Naive thymus-derived CD8-positive, alpha-beta T cell (primary cell): ENCODE measurements at regions of chr2 and their contacts with region 1.

Region 1: DNA sequence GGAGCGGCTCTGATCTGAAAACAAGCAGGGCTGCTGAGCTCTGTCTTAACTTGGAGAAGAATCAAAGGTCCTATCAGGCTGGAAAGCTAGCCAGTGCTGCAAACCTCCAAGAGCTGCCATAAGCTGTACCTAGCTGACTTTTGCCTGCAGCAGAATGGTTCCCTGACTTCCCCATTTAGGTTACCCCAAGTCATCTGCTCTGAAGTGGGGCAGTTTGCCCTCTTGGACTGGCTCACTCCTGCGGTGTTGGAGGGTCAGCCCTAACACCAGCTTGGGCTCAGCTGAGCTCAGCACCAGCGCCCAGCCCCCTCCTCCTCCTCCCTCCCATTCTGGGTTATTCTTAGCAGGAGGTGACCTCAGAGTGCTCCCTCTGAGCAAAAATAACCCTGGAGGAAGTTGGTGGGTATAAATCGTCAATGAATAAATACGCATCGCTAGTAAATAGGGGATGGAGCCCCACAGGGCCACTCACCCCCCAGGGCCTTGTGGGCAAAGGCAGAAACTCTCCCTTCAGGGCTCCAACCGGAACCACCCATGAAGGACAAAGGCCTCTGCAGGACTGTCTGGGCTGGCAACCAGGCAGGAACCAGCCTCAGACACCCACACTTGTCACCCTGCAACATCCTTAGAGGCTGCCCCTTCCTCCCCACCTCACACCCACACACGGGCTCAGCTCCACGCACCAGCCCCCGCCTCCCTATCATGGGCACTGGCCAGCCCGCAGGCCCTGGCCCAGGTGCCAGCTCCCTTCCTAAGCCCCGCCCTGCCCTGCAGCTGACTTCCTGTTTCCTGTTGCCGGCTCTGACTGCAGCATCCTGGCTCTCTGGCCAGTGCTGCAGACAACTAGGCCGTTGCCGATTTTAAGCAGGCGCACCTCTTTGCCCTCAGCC is 46.9 kb downstream of the DNMT3A start:
- DNase-seq: peak; percentile 56 to 89 (median 75)
- ATAC-seq: peak; percentile 79 to 82
- H3K4me3 Mint-ChIP-seq: peak overlapping the region; percentile 66 to 94 (median 83)
- H3K27ac Mint-ChIP-seq: peak overlapping the region; percentile 95 to 99 (median 98)
- H3K4me1 Mint-ChIP-seq: peaks cover 39 to 79% (median 75%) of the 10 kb centered on the region in 4 donors
- H3K27me3 Mint-ChIP-seq: no peaks in the 10 kb centered on the region

Region 2: GRCh38 chr2:25252281-25253105 is 42.3 kb before region 1 on chr2:
- POLR2A ChIA-PET with region 1: interaction called, 28 read pairs
- DNase-seq: peak; percentile 35 to 72 (median 49)
- ATAC-seq: peak; percentile 46 to 56
- H3K4me3 Mint-ChIP-seq: peak overlapping the region; percentile 83 to 95 (median 91)
- H3K27ac Mint-ChIP-seq: peak overlapping the region; percentile 85 to 96 (median 91)
- H3K4me1 Mint-ChIP-seq: peaks cover 42 to 62% (median 53%) of the 10 kb centered on the region in 4 donors
- H3K27me3 Mint-ChIP-seq: no peaks in the 10 kb centered on the region

Region 3: GRCh38 chr2:25265802-25266201 is 29.0 kb before region 1 on chr2:
- POLR2A ChIA-PET with region 1: interaction called, 12 read pairs
- DNase-seq: peak in 9 of 10 donors; percentile 23 to 74 (median 55)
- ATAC-seq: peak; percentile 87 to 89
- H3K4me3 Mint-ChIP-seq: peak overlapping the region in 8 of 10 donors; percentile 37 to 75 (median 60)
- H3K27ac Mint-ChIP-seq: peak overlapping the region; percentile 55 to 93 (median 84)
- H3K4me1 Mint-ChIP-seq: peaks cover 28 to 72% (median 63%) of the 10 kb centered on the region in 4 donors
- H3K27me3 Mint-ChIP-seq: no peaks in the 10 kb centered on the region

Region 4: GRCh38 chr2:25309402-25309801 is 14.6 kb after region 1 on chr2:
- POLR2A ChIA-PET with region 1: interaction called, 83 read pairs
- DNase-seq: peak; percentile 45 to 85 (median 66)
- ATAC-seq: peak; percentile 48 to 54
- H3K4me3 Mint-ChIP-seq: peak overlapping the region in 8 of 10 donors; percentile 23 to 73 (median 53)
- H3K27ac Mint-ChIP-seq: peak overlapping the region; percentile 58 to 91 (median 85)
- H3K4me1 Mint-ChIP-seq: peaks cover 50 to 98% (median 90%) of the 10 kb centered on the region in 4 donors
- H3K27me3 Mint-ChIP-seq: no peaks in the 10 kb centered on the region

Region 5: GRCh38 chr2:25314514-25315315 is 19.9 kb after region 1 on chr2:
- POLR2A ChIA-PET with region 1: interaction called, 83 read pairs
- DNase-seq: peak in 9 of 10 donors; percentile 39 to 78 (median 63)
- ATAC-seq: peak; percentile 83 to 88
- H3K4me3 Mint-ChIP-seq: peak overlapping the region; percentile 45 to 85 (median 79)
- H3K27ac Mint-ChIP-seq: peak overlapping the region; percentile 87 to 96 (median 93)
- H3K4me1 Mint-ChIP-seq: peaks cover 32 to 83% (median 72%) of the 10 kb centered on the region in 4 donors
- H3K27me3 Mint-ChIP-seq: no peaks in the 10 kb centered on the region

Region 6: GRCh38 chr2:25342372-25343186 is 47.8 kb after region 1 on chr2:
- POLR2A ChIA-PET with region 1: interaction called, 61 read pairs
- DNase-seq: peak; percentile 74 to 88 (median 82)
- ATAC-seq: peak; percentile 80 to 87
- H3K4me3 Mint-ChIP-seq: peak overlapping the region; percentile 70 to 90 (median 81)
- H3K27ac Mint-ChIP-seq: peak overlapping the region in 6 of 10 donors; percentile 37 to 90 (median 81)
- H3K4me1 Mint-ChIP-seq: peaks cover 14 to 40% (median 28%) of the 10 kb centered on the region in 4 donors
- H3K27me3 Mint-ChIP-seq: no peaks in the 10 kb centered on the region

Region 7: GRCh38 chr2:25362049-25362433 is 67.2 kb after region 1 on chr2:
- POLR2A ChIA-PET with region 1: interaction called, 14 read pairs
- DNase-seq: peak; percentile 85 to 99 (median 93)
- ATAC-seq: peak; percentile 89 to 97
- H3K4me3 Mint-ChIP-seq: peak overlapping the region; percentile 89 to 99 (median 94)
- H3K27ac Mint-ChIP-seq: peak overlapping the region; percentile 85 to 100 (median 94)
- H3K4me1 Mint-ChIP-seq: peaks cover 11 to 21% (median 19%) of the 10 kb centered on the region in 4 donors
- H3K27me3 Mint-ChIP-seq: no peaks in the 10 kb centered on the region